ENCODE measurements at regions of chr17 and their contacts with region 1.

Region 1: DNA sequence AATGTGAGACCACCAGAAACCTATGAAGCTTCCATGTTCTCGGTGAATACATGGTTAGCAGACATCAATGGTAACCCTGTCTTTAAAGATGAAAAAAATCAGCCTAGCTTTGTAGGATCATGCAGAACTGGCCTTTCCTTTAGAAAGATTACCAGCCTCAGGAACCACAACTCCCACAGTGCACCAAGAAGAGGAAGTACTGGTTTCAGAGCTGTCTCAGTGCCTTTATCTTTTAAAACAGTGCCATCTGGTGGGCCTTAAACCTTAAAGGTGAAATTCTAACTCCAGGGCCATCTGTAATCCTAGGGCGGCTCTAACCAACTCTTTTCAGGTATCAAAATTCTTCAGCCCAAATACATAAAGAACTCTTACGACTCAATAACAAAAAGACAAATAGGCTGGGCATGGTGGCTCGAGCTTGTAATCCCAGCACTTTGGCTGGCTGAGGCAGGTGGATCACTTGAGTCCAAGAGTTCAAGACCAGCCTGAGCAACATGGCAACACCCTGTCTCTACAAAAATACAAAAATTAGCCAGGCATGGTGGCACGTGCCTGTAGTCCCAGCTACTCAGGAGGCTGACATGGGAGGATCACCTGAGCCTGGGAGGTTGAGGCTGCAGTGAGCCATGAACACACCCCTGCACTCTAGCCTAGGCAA is 5.4 kb downstream of the ATPAF2 start:
- H3K4me3 ChIP-seq: no peak overlapping the region
- H3K27ac ChIP-seq: no peak overlapping the region
- H3K4me1 ChIP-seq: no peaks in the 10 kb centered on the region; the same call in 1 of the 2 replicates
- CTCF ChIP-seq: peak; percentile 65; the same call in 1 of the 2 replicates

Region 2: DNA sequence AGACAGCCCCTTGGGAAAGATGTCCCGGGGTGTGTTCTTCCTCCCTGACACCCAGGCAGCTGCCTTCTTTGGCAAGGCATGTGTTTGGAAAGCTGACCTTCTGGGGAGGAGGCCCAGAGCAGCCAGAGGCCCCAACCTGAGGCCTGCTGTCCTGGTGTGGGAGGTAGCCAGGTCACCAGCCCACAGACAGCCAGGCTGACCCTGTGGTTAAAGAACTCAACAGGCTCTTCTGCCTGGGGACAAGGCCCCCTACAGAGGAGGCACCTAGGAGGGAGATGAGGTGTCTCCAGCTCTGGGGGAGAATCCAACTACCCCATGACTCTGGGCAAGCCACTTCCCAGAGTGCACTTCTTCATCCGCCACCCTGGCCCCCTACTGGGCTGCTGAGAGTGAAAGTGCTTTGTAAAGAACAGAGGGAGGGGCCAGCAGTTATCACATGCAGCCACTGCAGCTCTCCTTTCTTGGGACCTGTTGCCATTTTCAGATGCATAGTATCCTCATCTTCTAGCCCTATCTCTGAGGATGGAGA is 183.7 kb before region 1 on chr17:
- CTCF ChIA-PET with region 1: interaction called, 10 read pairs
- POLR2A ChIA-PET with region 1: no interaction called
- H3K4me3 ChIP-seq: no peak overlapping the region
- H3K27ac ChIP-seq: peak overlapping the region; percentile 70
- H3K4me1 ChIP-seq: peaks cover 25% of the 10 kb centered on the region
- CTCF ChIP-seq: no peak; the same call in 1 of the 2 replicates

Region 3: GRCh38 chr17:17900615-17901520 is 132.7 kb before region 1 on chr17:
- CTCF ChIA-PET with region 1: interaction called, 14 read pairs
- POLR2A ChIA-PET with region 1: no interaction called
- H3K4me3 ChIP-seq: no peak overlapping the region
- H3K27ac ChIP-seq: 0 out of 2 replicates have a peak overlapping the region, but pooled peaks have one; percentile 14
- H3K4me1 ChIP-seq: 0 out of 2 replicates have a peak, but pooled peaks cover 5% of the 10 kb centered on the region
- CTCF ChIP-seq: no peak

Region 4: GRCh38 chr17:17935321-17936271 is 98.0 kb before region 1 on chr17:
- CTCF ChIA-PET with region 1: interaction called, 13 read pairs
- POLR2A ChIA-PET with region 1: interaction called, 4 read pairs
- H3K4me3 ChIP-seq: no peak overlapping the region
- H3K27ac ChIP-seq: no peak overlapping the region
- H3K4me1 ChIP-seq: peaks cover 27% of the 10 kb centered on the region
- CTCF ChIP-seq: no peak